Activated CD8-positive, alpha-beta T cell treated with anti-CD3 and anti-CD28 coated beads, Interleukin-2, amount 10 ng/mL, durations not matched to agents 7 days and 5 days (primary cell): ENCODE measurements at regions of chr12 and their contacts with region 1.

Region 1: GRCh38 chr12:95473884-95474659 is at the start of gene METAP2:
- DNase-seq: peak; percentile 91
- ATAC-seq: peak; percentile 99
- H3K4me3 Mint-ChIP-seq: peak within 1 kb of the TSS; percentile 100
- H3K27ac Mint-ChIP-seq: peak within 1 kb of the TSS; percentile 100
- H3K4me1 Mint-ChIP-seq: peaks cover 44% of the 10 kb centered on the region
- H3K27me3 Mint-ChIP-seq: no peaks in the 10 kb centered on the region
- total RNA-seq, gene METAP2: 67.7 to 69.4 TPM

Region 2: DNA sequence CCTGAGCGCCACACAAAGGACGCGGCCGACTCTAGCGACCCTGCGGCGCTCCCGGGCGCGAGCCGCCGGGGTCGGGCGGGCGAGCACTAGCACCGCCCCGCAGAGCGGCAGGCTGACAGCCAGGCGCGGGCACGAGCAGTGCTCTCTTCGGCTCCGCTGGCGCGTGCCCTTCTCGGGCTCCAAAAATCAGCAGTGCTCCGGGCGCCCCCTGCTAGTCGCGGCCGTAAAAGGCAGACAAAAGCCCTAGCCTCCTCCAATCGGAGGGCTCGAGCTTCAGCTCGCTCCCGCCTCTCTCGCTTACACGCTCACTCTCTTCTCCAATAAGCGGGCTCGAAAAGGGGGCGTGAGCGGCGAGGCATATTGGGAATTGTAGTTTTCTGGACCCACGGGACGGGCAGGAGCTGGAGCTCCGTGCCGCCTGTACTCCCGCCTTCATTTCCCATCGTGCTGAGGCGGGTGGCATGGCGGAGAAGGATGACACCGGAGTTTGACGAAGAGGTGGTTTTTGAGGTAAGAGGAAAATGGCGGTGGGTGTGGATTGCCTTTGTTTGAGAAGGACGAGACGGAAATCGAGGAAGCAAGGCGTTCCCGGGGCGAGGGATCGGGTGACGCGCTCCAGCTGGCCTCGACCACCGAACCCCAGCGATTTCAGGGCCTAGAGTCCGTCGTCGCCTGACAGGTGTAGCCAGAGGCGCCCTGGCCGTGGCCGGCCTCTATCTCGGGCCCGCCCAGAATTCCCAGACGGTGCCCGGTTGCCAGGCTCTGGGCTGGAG is 256.5 kb before region 1 on chr12 and contains the starts of genes FGD6 and VEZT:
- CTCF ChIA-PET with region 1: interaction called, 7 read pairs
- POLR2A ChIA-PET with region 1: interaction called, 19 read pairs
- DNase-seq: peak; percentile 99
- ATAC-seq: peak; percentile 95
- H3K4me3 Mint-ChIP-seq: peak within 1 kb of the TSS; percentile 89
- H3K27ac Mint-ChIP-seq: peak within 1 kb of the TSS; percentile 93
- H3K4me1 Mint-ChIP-seq: peaks cover 26% of the 10 kb centered on the region
- H3K27me3 Mint-ChIP-seq: peaks cover 11% of the 10 kb centered on the region
- total RNA-seq, gene FGD6: 0.50 to 0.70 TPM
- total RNA-seq, gene VEZT: 29.0 to 31.0 TPM

Region 3: GRCh38 chr12:95412482-95413311 is 61.4 kb before region 1 on chr12:
- CTCF ChIA-PET with region 1: no interaction called
- POLR2A ChIA-PET with region 1: no interaction called
- DNase-seq: no peak
- ATAC-seq: no peak
- H3K4me3 Mint-ChIP-seq: no peak overlapping the region
- H3K27ac Mint-ChIP-seq: no peak overlapping the region
- H3K4me1 Mint-ChIP-seq: no peaks in the 10 kb centered on the region
- H3K27me3 Mint-ChIP-seq: peaks cover 2% of the 10 kb centered on the region